ENCODE measurements at regions of chr6 and their contacts with region 1.

Region 1: DNA sequence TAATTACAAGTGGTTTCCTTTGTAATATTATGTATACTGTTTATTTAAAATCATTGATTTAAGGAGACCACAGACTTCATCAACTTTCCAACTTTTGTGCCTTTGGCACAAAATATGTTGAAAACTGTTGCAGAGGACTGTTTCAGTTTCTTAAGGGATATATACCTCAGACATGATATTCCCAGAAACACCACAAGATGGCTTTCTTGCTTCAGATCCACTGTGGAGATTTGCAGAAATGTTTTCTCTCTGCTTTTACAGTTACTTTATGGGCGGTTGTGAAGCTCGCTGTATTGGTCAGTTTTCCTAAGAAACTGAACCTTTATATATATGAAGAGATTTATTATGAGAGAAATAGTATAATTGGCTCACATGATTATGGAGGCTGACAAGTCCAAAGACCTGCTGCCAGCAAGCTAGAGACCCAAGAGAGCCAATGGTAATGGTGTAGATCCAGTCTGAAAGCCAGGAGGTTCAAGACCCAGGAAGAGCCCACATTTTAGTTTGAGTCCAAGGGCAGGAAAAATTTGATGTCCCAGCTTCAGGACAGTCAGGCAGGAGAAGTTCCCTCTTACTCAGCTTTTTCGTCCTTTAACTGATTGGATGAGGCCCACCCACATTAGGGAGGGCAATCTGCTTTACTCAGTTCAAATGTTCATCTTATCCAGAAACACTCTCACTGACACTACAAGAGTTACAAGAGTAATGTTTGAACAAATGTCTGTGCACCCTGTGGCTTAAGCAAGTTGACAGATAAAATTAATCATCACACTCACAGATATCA is 12.8 kb downstream of the ME1 start:
- DNase-seq: peak; percentile 16
- H3K4me3 Mint-ChIP-seq: no peak overlapping the region
- H3K27ac Mint-ChIP-seq: no peak overlapping the region
- H3K4me1 Mint-ChIP-seq: no peaks in the 10 kb centered on the region
- H3K27me3 Mint-ChIP-seq: no peaks in the 10 kb centered on the region
- CTCF ChIP-seq: peak; percentile 44

Region 2: GRCh38 chr6:83221889-83222479 is 196.1 kb before region 1 on chr6:
- CTCF ChIA-PET with region 1: no interaction called
- intact Hi-C with region 1: loop called (anchors 5 kb)
- DNase-seq: no peak
- H3K4me3 Mint-ChIP-seq: no peak overlapping the region
- H3K27ac Mint-ChIP-seq: no peak overlapping the region
- H3K4me1 Mint-ChIP-seq: no peaks in the 10 kb centered on the region
- H3K27me3 Mint-ChIP-seq: no peaks in the 10 kb centered on the region
- CTCF ChIP-seq: peak; percentile 19

Region 3: DNA sequence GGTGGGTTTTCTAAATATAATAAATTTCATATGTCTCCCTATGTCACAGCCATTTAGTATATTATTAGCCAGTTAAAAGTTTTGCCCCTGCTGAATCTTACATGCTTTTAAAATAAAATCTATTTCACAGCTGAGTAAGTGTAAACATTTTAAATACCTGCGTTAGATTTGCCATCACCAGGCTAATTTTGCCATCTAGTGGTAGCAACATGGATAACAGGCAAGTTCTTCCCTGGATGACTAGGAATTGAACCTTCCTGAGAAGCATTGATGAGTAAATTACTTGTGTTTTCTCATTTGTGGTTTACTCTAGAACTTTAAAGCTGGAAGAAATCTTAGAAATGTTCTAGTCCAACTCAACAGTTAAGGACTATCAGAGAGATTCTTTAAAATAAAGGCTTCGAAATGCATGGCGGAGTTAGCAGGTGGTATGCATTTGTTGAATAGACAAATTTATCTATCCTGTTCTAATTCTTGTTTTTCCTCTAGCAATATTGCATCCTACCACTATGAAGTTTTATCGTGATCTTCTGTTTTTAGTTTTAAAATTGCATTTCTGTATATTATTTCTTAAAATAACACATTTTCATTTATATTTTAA is 96.9 kb after region 1 on chr6:
- CTCF ChIA-PET with region 1: interaction called, 15 read pairs
- intact Hi-C with region 1: loop called (anchors 1 kb)
- DNase-seq: peak; percentile 56
- H3K4me3 Mint-ChIP-seq: no peak overlapping the region
- H3K27ac Mint-ChIP-seq: no peak overlapping the region
- H3K4me1 Mint-ChIP-seq: no peaks in the 10 kb centered on the region
- H3K27me3 Mint-ChIP-seq: no peaks in the 10 kb centered on the region
- CTCF ChIP-seq: peak; percentile 83

Region 4: DNA sequence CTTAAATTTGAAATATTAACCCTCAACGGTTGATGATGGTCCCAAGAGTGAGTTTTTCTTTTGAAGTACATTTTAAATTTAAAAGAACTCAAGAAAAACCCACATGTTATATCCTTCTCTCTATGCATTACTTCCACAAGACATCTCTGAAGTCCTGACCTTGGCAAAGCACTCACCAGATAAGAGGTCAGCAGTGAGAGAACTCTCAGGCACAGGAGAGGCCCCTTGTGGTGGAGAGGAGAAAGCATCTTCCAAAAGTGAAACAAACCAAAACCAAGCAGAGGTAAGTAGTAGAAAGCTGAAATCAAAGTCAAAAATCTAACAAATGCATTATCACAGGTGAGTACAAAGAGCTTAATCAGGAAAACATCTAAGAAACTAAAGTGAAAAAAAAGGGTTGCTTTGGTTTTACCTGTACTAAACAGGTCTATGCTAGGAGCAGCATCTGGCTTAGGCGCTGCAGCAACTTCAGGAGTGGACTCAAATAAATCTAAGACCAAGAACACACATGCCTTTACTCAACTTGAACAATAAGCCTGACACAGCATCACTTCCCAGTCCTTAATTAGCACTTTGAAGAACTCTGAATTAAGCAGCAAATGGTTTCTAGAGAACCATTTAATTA is 174.8 kb after region 1 on chr6:
- CTCF ChIA-PET with region 1: no interaction called
- intact Hi-C with region 1: loop called (anchors 2 kb)
- DNase-seq: peak; percentile 31
- H3K4me3 Mint-ChIP-seq: no peak overlapping the region
- H3K27ac Mint-ChIP-seq: no peak overlapping the region
- H3K4me1 Mint-ChIP-seq: no peaks in the 10 kb centered on the region
- H3K27me3 Mint-ChIP-seq: no peaks in the 10 kb centered on the region
- CTCF ChIP-seq: peak; percentile 47

Measured in Calu3 (cell line).